ENCODE measurements at regions of chr15 and their contacts with region 1.

Region 1: DNA sequence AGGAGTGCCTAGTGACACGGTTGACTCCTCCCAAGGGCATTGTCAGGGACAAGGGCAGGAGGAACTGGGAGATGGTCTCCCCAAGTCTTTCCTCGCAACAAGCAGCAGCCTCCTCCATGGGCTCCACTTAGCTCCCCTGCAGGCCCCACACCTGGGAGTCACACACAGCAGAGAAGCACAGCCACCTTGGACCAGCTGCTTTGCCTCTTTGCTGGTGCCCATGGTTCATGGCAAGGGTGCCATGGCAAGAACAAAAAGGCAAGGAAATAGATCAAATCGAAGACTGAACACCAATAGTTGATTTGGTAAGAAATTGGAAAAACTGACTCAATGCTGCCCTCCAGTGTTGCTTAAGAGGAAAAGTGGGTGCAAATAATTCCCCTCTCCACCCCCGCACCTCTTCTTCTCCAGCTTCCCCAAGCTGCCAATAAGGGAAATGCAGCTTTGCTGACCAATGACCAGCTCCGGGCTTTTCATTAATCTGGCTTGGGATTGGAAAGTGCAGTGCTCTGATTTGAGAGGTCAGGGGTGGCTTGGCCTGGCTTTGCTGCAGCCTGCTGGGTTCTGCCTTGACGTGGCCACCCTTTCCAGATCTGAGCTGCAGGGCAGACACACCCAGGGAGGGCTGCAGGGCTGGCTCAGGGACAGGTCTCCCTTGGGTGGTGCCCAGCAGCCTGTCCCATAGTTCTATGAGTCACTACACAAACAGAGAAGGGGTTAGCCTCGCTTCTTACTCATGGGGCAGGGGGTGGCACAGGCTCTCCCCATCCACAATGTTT is 162.0 kb downstream of the KLF13 start:
- DNase-seq: peak in 4 of 5 donors; percentile 43 to 62 (median 58)
- ATAC-seq: peak; percentile 52 to 81 (median 80)
- H3K4me3 ChIP-seq: no peak overlapping the region
- H3K27ac ChIP-seq: peak overlapping the region in 4 of 12 donors; percentile 33 to 51 (median 41)
- H3K4me1 ChIP-seq: peaks cover 0 to 26% (median 17%) of the 10 kb centered on the region in 12 donors
- H3K27me3 ChIP-seq: peaks cover 0 to 10% (median 0%) of the 10 kb centered on the region in 9 donors
- CTCF ChIP-seq: peak; percentile 70 to 99 (median 90)
- POLR2A ChIP-seq: no peak

Region 2: GRCh38 chr15:30991255-30992072 is 497.2 kb before region 1 on chr15 and contains the start of gene MTMR10:
- intact Hi-C with region 1: loop called in 1 of 10 experiments (anchors 2 kb)
- DNase-seq: peak; percentile 61 to 88 (median 84)
- ATAC-seq: peak; percentile 70 to 98 (median 96)
- H3K4me3 ChIP-seq: peak within 1 kb of the TSS; percentile 82 to 99 (median 94)
- H3K27ac ChIP-seq: peak within 1 kb of the TSS; percentile 89 to 99 (median 96)
- H3K4me1 ChIP-seq: peaks cover 0 to 48% (median 40%) of the 10 kb centered on the region in 12 donors
- H3K27me3 ChIP-seq: no peaks in the 10 kb centered on the region
- CTCF ChIP-seq: no peak
- POLR2A ChIP-seq: peak in 1 of 2 donors; percentile 82
- total RNA-seq, gene MTMR10: 14.4 to 38.9 (median 27.8) TPM

Region 3: DNA sequence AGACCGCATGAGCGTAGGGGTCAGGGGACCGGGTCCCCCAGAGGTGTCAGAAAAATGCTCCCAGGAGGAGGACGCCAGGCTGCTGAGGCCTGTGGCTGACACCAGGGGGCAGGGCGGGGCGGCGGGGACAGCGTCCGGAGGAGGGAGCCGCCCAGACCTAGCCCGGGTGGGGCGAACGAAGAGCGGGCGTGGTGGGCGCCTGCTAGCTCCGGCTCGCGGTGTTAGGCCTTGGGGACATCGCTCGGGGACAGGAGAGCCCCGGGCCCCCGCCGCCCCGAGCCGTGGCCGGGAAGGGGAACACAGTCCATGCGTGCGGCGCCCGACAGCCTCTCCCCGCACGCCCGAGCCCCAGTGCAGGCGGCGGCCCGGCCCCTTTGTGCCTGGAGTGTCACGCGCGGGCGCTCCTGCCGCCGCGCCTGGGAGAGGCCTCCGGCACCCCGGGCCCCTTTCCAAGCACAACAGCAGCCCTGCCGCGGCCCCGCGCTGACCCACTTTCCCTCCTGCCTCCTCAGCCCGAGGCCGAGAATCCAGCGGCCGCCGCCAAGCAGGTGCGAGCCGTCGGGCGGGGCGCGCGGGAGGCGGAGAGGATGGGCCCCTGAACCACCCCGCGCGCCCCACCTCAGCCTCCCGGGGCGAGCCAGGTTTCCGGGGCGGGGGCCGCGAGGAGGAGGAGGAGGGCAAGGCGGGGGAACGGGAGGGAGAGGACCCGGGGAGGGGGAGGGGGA is 273.0 kb before region 1 on chr15:
- intact Hi-C with region 1: loop called in 1 of 10 experiments (anchors 5 kb)
- DNase-seq: peak; percentile 81 to 95 (median 88)
- ATAC-seq: peak; percentile 77 to 90 (median 87)
- H3K4me3 ChIP-seq: peak overlapping the region; percentile 44 to 75 (median 65)
- H3K27ac ChIP-seq: peak overlapping the region; percentile 91 to 98 (median 96)
- H3K4me1 ChIP-seq: peaks cover 0 to 67% (median 33%) of the 10 kb centered on the region in 12 donors
- H3K27me3 ChIP-seq: no peaks in the 10 kb centered on the region
- CTCF ChIP-seq: peak; percentile 72 to 98 (median 92)
- POLR2A ChIP-seq: peak in 1 of 2 donors; percentile 36

Region 4: GRCh38 chr15:31365655-31366127 is 122.9 kb before region 1 on chr15:
- intact Hi-C with region 1: loop called in 3 of 10 experiments (anchors 5 to 10 kb)
- DNase-seq: peak; percentile 89 to 98 (median 93)
- ATAC-seq: peak; percentile 89 to 92 (median 91)
- H3K4me3 ChIP-seq: peak overlapping the region in 11 of 12 donors; percentile 7 to 47 (median 35)
- H3K27ac ChIP-seq: peak overlapping the region; percentile 87 to 96 (median 92)
- H3K4me1 ChIP-seq: peaks cover 31 to 100% (median 92%) of the 10 kb centered on the region in 12 donors
- H3K27me3 ChIP-seq: no peaks in the 10 kb centered on the region
- CTCF ChIP-seq: peak in 11 of 12 donors; percentile 8 to 66 (median 43)
- POLR2A ChIP-seq: peak in 1 of 2 donors; percentile 31

Region 5: DNA sequence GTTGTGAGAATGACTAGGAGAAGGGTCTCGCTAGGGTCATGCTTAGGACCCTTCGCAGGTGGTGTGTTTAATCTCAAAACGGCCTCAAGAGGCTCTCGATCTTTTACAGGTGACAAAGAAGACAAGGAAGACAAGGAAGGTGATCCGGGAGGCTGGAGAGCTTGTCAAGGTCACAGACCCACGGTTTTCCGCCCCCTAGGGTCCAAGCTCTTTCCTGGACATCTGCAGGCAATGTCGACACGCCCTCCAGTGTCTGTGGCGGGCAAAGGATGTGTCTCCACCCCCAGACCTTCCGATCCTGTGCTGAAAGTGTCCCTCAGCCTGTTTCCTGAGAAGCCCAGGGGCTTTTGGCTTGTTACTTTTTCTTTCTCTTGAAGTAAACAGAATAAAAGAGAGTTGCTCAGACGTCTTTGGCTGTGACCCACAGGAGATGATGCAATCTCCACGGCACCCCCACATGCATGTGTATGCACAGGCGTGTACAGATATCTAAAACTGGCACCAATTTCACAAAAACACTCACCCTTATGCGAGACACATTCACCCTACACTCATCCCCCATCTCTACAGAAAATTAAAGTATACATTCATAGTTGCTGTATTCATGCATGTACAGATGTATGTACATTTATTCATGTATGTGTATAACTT is 53.2 kb before region 1 on chr15:
- intact Hi-C with region 1: loop called in 9 of 10 experiments (anchors 2 to 5 kb)
- DNase-seq: peak; percentile 78 to 90 (median 86)
- ATAC-seq: peak; percentile 82 to 92 (median 86)
- H3K4me3 ChIP-seq: peak overlapping the region in 9 of 12 donors; percentile 8 to 54 (median 30)
- H3K27ac ChIP-seq: peak overlapping the region; percentile 50 to 94 (median 68)
- H3K4me1 ChIP-seq: peaks cover 0 to 52% (median 21%) of the 10 kb centered on the region in 12 donors
- H3K27me3 ChIP-seq: no peaks in the 10 kb centered on the region
- CTCF ChIP-seq: peak; percentile 58 to 95 (median 80)
- POLR2A ChIP-seq: peak in 1 of 2 donors; percentile 10

Region 6: DNA sequence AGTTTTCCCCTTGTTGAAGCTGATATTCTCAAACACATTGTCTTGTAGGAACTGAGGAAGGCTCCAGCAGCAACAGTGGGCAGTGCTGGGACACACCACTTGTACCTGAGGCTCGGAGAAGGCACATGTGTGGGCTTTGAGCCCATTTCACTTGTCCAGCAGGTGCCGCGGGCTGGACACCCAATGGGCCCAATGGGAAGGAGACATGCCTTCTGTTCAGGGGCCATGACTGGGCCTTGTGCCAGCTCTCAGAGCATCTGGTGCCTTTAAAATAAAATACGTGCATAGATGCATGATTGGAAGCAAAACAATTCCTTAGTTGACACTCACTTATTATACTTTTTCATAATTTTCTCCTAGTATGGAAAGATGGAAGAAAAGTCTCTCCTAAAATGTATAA is 172.2 kb after region 1 on chr15:
- intact Hi-C with region 1: no loop called
- DNase-seq: no peak
- ATAC-seq: no peak
- H3K4me3 ChIP-seq: no peak overlapping the region
- H3K27ac ChIP-seq: no peak overlapping the region
- H3K4me1 ChIP-seq: no peaks in the 10 kb centered on the region
- H3K27me3 ChIP-seq: no peaks in the 10 kb centered on the region
- CTCF ChIP-seq: no peak
- POLR2A ChIP-seq: no peak

Measured in heart left ventricle (tissue), 16 donors.